Activated B cell treated with CpG ODN at 0.5 μM for 24 hours (primary cell): ENCODE measurements at regions of chr4 and their contacts with region 1.

Region 1: DNA sequence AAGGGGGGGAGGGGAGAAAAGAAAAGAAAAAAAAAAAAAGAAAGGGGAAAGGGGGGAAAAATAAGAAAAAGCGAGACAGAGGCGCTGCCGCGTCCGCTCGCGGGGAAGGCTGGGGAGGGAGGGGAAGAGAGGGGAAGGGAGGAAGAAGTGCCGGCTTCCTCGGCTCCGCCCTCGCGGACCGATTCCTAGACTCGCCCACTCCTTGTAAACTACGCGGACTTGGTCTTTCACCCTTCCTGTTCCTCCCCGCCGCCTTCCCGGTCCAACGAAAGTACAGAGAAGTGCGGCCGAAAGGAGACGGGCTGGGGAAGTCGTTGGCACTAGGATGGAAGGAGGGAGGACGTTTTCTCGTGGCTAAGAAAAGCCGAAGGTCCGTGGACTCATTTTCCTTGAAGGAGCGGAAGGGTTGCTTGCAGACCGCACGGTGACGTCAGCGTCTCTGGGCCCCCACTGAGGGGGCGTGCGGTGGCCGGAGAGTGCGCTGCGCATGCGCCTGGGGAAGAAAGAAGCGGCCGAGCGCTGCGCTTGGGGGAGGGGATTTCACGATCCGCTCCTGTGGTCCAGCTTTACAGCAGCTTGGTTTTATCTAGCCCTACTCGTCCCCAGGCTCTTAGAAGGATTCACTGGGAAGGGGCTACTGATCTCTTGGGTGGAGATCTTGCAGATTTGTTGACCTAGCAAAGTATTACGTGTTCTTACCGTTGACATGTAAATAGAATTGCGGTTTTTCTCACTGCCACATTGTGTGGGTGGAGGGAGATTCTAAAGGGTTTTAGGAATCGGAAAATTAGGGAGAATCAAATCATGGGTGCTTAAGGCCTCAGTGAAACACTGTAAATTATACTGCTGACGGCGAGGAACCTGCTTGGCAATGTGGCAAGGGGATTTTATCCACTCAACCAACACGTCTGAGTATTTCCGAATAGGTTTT is at the start of gene CCNI:
- DNase-seq: peak; percentile 93
- ATAC-seq: peak; percentile 77
- H3K4me3 Mint-ChIP-seq: no peak within 1 kb of the TSS
- H3K27ac Mint-ChIP-seq: peak within 1 kb of the TSS; percentile 100
- H3K4me1 Mint-ChIP-seq: peaks cover 40% of the 10 kb centered on the region
- H3K27me3 Mint-ChIP-seq: no peaks in the 10 kb centered on the region
- CTCF ChIP-seq: no peak
- total RNA-seq, gene CCNI: 237 and 246 TPM in 2 replicates

Region 2: DNA sequence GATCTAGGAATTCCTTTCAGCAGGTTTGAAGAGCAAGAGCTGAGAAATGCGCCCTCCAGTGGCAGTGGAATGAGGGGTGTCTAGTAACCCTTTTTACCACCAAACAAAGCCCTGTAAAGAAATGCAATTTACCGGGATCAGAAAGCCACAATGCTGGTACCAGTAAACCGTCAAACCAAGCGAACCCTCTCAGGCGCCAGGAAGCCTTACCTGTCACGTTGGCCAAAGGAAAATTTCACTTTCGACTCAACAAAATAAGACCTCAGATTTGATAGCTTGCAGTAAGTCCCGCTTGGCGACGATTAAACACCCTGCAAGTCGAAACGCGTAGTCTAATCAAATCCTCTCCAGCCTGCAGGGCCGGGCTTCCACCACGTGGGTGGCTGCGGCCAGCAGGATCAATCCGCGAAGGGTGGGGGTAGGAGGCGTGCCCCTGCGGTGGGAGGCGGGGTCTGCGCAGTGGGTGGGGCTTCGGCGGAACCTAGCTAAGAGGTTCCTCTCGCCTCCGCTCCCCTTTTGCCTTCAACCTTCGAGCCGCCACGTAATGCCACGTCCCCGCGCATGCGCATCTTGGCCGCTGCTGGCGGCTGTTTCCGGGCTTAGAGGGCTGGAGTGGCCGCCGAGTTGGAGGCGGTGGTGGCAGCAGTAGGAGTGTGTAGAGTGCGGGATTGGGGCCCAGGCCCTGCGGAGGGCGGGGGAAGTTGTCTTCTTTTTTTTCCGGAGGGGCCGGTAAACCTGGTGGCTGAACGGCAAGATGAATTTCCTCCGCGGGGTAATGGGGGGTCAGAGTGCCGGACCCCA is 1351.9 kb before region 1 on chr4 and contains the start of gene USO1:
- CTCF ChIA-PET with region 1: no interaction called
- POLR2A ChIA-PET with region 1: no interaction called
- intact Hi-C with region 1: loop called (anchors 1 kb)
- DNase-seq: peak; percentile 99
- ATAC-seq: peak; percentile 95
- H3K4me3 Mint-ChIP-seq: peak within 1 kb of the TSS; percentile 100
- H3K27ac Mint-ChIP-seq: peak within 1 kb of the TSS; percentile 99
- H3K4me1 Mint-ChIP-seq: peaks cover 52% of the 10 kb centered on the region
- H3K27me3 Mint-ChIP-seq: no peaks in the 10 kb centered on the region
- CTCF ChIP-seq: peak; percentile 23
- total RNA-seq, gene USO1: 41.3 and 41.7 TPM in 2 replicates

Region 3: GRCh38 chr4:77052352-77052751 is 23.8 kb before region 1 on chr4:
- CTCF ChIA-PET with region 1: interaction called, 4 read pairs
- POLR2A ChIA-PET with region 1: no interaction called
- intact Hi-C with region 1: loop called (anchors 1 kb)
- DNase-seq: peak; percentile 33
- ATAC-seq: peak; percentile 47
- H3K4me3 Mint-ChIP-seq: no peak overlapping the region
- H3K27ac Mint-ChIP-seq: no peak overlapping the region
- H3K4me1 Mint-ChIP-seq: no peaks in the 10 kb centered on the region
- H3K27me3 Mint-ChIP-seq: no peaks in the 10 kb centered on the region
- CTCF ChIP-seq: no peak

Region 4: GRCh38 chr4:77156533-77156911 is 80.4 kb after region 1 on chr4:
- CTCF ChIA-PET with region 1: interaction called, 4 read pairs
- POLR2A ChIA-PET with region 1: interaction called, 105 read pairs
- intact Hi-C with region 1: loop called (anchors 1 kb)
- DNase-seq: no peak
- ATAC-seq: peak; percentile 84
- H3K4me3 Mint-ChIP-seq: peak overlapping the region; percentile 99
- H3K27ac Mint-ChIP-seq: peak overlapping the region; percentile 100
- H3K4me1 Mint-ChIP-seq: peaks cover 75% of the 10 kb centered on the region
- H3K27me3 Mint-ChIP-seq: no peaks in the 10 kb centered on the region
- CTCF ChIP-seq: no peak

Region 5: DNA sequence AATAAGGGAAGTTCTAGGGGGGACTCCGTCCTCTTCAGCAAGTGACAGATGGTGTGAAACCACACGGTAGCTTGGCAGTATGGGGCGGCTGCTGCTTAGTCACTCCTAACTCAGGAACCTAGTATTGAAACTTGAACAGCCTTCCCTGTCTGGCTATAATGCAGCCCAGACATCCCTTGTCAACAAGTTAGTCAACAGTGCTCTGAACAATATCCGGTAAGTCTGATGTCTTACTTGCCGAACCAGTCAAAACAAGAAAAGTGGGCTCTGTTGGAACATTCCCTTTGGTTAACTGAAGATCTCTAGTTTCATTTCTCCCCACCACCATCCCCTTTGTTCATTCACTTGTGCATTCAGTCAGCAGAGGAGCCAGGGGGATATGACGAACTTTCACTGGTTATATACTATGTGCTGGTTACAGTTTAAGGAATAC is 510.8 kb after region 1 on chr4:
- CTCF ChIA-PET with region 1: no interaction called
- POLR2A ChIA-PET with region 1: no interaction called
- intact Hi-C with region 1: loop called (anchors 1 kb)
- DNase-seq: peak; percentile 35
- ATAC-seq: peak; percentile 93
- H3K4me3 Mint-ChIP-seq: peak overlapping the region; percentile 13
- H3K27ac Mint-ChIP-seq: peak overlapping the region; percentile 76
- H3K4me1 Mint-ChIP-seq: peaks cover 28% of the 10 kb centered on the region
- H3K27me3 Mint-ChIP-seq: no peaks in the 10 kb centered on the region
- CTCF ChIP-seq: no peak

Region 6: GRCh38 chr4:77862478-77863216 is 786.5 kb after region 1 on chr4 and contains the start of gene MRPL1:
- CTCF ChIA-PET with region 1: no interaction called
- POLR2A ChIA-PET with region 1: interaction called, 10 read pairs
- intact Hi-C with region 1: loop called (anchors 1 kb)
- DNase-seq: peak; percentile 72
- ATAC-seq: peak; percentile 86
- H3K4me3 Mint-ChIP-seq: peak within 1 kb of the TSS; percentile 97
- H3K27ac Mint-ChIP-seq: peak within 1 kb of the TSS; percentile 100
- H3K4me1 Mint-ChIP-seq: peaks cover 47% of the 10 kb centered on the region
- H3K27me3 Mint-ChIP-seq: no peaks in the 10 kb centered on the region
- CTCF ChIP-seq: no peak
- total RNA-seq, gene MRPL1: 31.7 and 38.3 TPM in 2 replicates

Region 7: GRCh38 chr4:78766650-78767049 is 1690.5 kb after region 1 on chr4:
- CTCF ChIA-PET with region 1: no interaction called
- POLR2A ChIA-PET with region 1: no interaction called
- intact Hi-C with region 1: no loop called
- DNase-seq: no peak
- ATAC-seq: peak; percentile 94
- H3K4me3 Mint-ChIP-seq: peak overlapping the region; percentile 68
- H3K27ac Mint-ChIP-seq: peak overlapping the region; percentile 84
- H3K4me1 Mint-ChIP-seq: peaks cover 33% of the 10 kb centered on the region
- H3K27me3 Mint-ChIP-seq: no peaks in the 10 kb centered on the region
- CTCF ChIP-seq: no peak